ENCODE measurements at regions of chr1 and their contacts with region 1.

Region 1: DNA sequence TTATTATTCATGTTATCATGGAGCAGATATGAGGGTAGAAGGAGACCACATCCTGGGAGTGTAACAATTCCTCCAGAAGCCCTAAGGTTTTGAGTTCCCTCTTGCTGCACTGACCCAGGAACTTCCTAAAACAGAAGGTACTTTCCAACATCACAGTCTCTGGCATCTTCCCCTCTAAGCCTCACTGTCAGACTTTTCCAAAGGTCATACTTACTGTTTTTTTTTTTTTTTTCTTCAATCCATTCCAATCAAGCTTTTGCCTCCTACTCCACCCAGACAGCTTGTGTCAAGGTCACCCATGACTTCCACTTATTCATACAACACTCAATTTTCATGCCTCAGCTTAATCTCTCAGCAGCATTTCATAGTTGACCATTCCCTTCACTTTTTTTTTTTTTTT is 18.4 kb upstream of the UQCRHL start:
- DNase-seq: no peak
- H3K4me3 Mint-ChIP-seq: no peak overlapping the region
- H3K27ac Mint-ChIP-seq: no peak overlapping the region
- H3K4me1 Mint-ChIP-seq: peaks cover 32% of the 10 kb centered on the region
- H3K27me3 Mint-ChIP-seq: no peaks in the 10 kb centered on the region

Region 2: DNA sequence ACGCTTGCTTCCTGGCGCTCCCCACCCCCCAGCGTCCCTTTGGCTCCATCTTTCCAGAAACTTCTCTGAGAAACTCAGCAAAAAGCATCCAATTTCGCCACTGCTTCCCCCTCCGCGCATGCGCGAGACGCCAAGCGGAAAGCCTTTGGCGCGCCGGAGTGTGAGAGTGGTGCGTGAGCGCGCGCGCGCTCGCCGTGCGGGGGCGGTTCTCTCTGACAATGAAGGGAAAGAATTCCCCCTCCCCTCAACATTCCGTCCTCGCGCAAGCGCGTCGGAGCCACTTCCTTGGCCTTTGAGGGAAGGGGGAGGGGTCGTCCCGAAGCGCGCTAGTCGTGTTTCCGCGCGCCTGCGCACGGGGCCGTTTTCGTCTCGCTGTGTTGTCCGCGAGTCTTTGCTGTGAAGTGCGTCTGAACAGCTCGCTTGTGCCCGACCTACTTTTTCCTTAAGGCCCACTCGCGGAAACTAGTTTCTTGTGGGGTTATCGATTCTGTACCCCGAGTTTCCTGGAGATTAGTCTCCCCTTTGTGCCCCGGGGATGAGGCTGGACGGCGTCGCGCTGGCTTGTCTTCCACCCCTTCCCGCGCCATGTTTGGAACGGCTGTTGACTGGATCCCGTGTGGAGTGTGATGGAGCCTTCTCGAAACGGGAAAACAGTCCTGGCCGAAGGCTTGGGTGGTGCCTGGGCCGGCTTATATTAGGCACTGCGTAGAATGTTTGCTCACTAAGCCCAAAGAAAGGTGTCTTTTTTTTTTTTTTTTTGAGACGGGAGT is 10.1 kb after region 1 on chr1:
- CTCF ChIA-PET with region 1: interaction called, 17 read pairs
- POLR2A ChIA-PET with region 1: interaction called, 28 read pairs
- DNase-seq: peak; percentile 99
- H3K4me3 Mint-ChIP-seq: peak overlapping the region; percentile 86
- H3K27ac Mint-ChIP-seq: peak overlapping the region; percentile 94
- H3K4me1 Mint-ChIP-seq: peaks cover 31% of the 10 kb centered on the region
- H3K27me3 Mint-ChIP-seq: no peaks in the 10 kb centered on the region

Measured in activated CD4-positive, alpha-beta memory T cell treated with anti-CD3 and anti-CD28 coated beads, Interleukin-2, amount 10 ng/mL, durations not matched to agents 7 days and 5 days (primary cell).